ENCODE measurements at regions of chr1 and their contacts with region 1.

Region 1: DNA sequence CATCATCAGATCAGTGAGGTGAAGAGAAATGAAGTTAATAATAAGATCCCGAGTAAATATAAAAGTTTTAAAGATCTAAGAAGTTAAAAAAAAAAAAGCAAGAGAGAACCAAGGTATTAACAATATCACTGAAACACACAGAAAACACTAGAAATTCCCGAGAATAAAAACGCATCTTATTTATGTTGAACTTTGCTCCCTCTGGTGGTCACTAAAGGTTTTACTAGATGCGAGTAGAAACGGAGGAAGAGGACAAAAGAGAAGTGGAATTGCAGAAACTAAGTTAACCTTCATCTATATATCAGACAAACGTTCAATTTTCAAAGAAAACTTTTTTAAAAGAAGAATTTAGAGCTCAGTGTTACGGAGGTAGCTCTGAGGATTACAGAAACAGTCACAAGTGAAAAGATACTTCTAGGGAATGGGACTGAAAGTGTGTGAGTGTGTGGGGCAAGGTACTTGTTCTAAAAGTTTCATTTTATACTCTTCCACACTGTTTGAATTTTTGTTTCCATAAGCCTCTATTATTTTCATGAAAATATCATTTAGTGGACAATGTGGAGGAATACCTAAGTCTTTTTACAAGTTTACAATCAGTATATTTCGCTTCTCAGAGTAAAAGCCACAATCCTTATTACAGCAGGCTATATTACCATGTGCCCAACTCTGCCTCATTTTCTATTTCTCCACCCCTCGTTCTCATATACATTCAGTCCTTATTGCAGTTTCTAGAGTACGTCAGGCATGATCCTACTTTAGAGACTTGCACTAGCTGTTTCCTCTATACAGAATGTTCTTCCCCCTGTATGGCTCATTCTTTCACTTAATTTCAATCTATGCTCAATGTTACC is 19.7 kb downstream of the ACBD6 start:
- DNase-seq: peak in 1 of 2 donors; percentile 73
- ATAC-seq: peak; percentile 50 to 62 (median 52)
- H3K4me3 ChIP-seq: no peak overlapping the region
- H3K4me3 Mint-ChIP-seq: peak overlapping the region; percentile 6
- H3K27ac ChIP-seq: no peak overlapping the region
- H3K27ac Mint-ChIP-seq: peak overlapping the region in 1 of 2 donors; percentile 23
- H3K4me1 ChIP-seq: no peaks in the 10 kb centered on the region
- H3K4me1 Mint-ChIP-seq: peaks cover 14 to 24% of the 10 kb centered on the region in 2 donors
- H3K27me3 ChIP-seq: no peaks in the 10 kb centered on the region
- H3K27me3 Mint-ChIP-seq: no peaks in the 10 kb centered on the region
- CTCF ChIP-seq: peak; percentile 87

Region 2: GRCh38 chr1:179706339-179706941 is 776.2 kb before region 1 on chr1:
- intact Hi-C with region 1: loop called (anchors 5 kb)
- DNase-seq: peak in 1 of 2 donors; percentile 85
- ATAC-seq: no peak
- H3K4me3 ChIP-seq: no peak overlapping the region
- H3K4me3 Mint-ChIP-seq: no peak overlapping the region
- H3K27ac ChIP-seq: no peak overlapping the region
- H3K27ac Mint-ChIP-seq: no peak overlapping the region
- H3K4me1 ChIP-seq: no peaks in the 10 kb centered on the region
- H3K4me1 Mint-ChIP-seq: peaks cover 0 to 8% of the 10 kb centered on the region in 2 donors
- H3K27me3 ChIP-seq: no peaks in the 10 kb centered on the region
- H3K27me3 Mint-ChIP-seq: peaks cover 2 to 4% of the 10 kb centered on the region in 2 donors
- CTCF ChIP-seq: peak; percentile 61

Region 3: DNA sequence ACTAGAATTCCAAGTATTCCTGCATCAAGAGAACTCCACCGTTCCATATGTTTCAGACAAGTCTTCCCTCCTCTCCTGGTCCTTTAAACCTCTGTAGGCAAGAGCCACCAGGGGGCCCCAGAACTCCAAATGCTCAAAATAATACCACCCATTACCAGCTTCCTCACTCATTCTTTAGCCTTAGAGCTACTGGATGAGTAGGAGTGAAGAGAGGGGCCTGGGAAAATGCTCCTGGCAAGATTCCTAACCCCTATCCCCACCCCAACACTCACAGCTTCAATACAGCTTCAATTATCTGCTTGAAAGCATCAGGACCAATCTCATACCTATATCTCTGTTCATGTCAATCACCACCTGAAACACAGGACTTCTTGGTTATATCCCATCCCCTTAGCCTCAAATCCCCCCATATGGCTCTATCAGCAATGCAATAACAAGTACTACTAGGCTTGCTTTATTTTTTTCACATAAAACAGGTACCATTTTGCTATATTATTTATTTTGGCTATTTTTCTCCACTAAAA is 614.8 kb before region 1 on chr1:
- intact Hi-C with region 1: loop called (anchors 5 kb)
- DNase-seq: peak; percentile 35 to 73
- ATAC-seq: peak in 2 of 3 donors; percentile 77 to 89
- H3K4me3 ChIP-seq: no peak overlapping the region
- H3K4me3 Mint-ChIP-seq: no peak overlapping the region
- H3K27ac ChIP-seq: no peak overlapping the region
- H3K27ac Mint-ChIP-seq: peak overlapping the region in 1 of 2 donors; percentile 52
- H3K4me1 ChIP-seq: no peaks in the 10 kb centered on the region
- H3K4me1 Mint-ChIP-seq: peaks cover 18 to 24% of the 10 kb centered on the region in 2 donors
- H3K27me3 ChIP-seq: no peaks in the 10 kb centered on the region
- H3K27me3 Mint-ChIP-seq: no peaks in the 10 kb centered on the region
- CTCF ChIP-seq: peak; percentile 79

Region 4: GRCh38 chr1:180188091-180188506 is 294.6 kb before region 1 on chr1:
- intact Hi-C with region 1: loop called (anchors 2 kb)
- DNase-seq: peak in 1 of 2 donors; percentile 13
- ATAC-seq: no peak
- H3K4me3 ChIP-seq: no peak overlapping the region
- H3K4me3 Mint-ChIP-seq: no peak overlapping the region
- H3K27ac ChIP-seq: no peak overlapping the region
- H3K27ac Mint-ChIP-seq: no peak overlapping the region
- H3K4me1 ChIP-seq: peaks cover 47% of the 10 kb centered on the region
- H3K4me1 Mint-ChIP-seq: peaks cover 43 to 48% of the 10 kb centered on the region in 2 donors
- H3K27me3 ChIP-seq: no peaks in the 10 kb centered on the region
- H3K27me3 Mint-ChIP-seq: peaks cover 7 to 9% of the 10 kb centered on the region in 2 donors
- CTCF ChIP-seq: peak; percentile 33

Region 5: DNA sequence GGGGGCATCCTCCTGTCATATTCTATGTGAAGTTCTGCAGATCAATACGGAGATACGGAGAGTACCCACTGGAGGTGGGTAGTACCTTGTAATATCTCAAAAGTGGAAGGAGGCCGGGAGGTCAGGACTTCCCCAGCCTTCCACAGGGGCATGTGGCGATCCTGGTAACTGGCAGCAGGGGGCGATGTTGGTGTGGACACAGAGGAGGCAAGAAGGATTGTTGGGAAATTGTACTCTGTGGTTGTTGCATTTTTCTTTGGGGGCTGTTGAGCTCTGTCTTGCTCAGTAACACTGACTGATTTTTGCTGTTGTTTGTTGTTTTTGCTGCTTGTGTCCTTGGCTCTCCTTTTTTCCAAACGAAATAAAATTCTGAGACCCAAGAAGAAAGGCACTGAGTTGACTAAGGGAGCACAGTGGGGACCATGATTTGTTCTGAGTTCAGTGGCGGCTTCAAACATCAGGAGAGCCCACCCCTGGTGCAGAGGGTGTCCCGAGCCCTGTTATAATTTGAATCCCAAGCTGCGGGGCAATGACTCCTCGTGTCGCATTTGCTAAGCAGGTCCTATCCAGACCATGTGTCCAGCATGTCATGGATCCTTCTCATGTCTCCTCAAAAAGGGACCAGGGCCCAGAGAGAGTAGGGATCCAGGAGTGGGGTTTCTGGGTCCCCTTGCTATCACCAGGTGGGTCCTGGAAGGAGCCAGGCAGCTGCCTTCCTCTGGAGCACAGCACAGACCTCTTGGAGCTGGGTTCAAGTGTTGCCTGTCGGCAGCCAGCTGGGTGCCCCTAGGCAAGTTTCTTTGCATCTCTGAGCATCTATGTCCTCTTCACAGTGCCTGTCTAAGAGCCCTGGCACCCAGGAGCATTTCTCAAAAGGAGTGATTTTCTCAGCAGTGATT is 229.8 kb before region 1 on chr1:
- intact Hi-C with region 1: loop called (anchors 1 kb)
- DNase-seq: peak; percentile 55 to 76
- ATAC-seq: peak; percentile 70 to 84 (median 70)
- H3K4me3 ChIP-seq: no peak overlapping the region
- H3K4me3 Mint-ChIP-seq: no peak overlapping the region
- H3K27ac ChIP-seq: no peak overlapping the region
- H3K27ac Mint-ChIP-seq: no peak overlapping the region
- H3K4me1 ChIP-seq: peaks cover 7% of the 10 kb centered on the region
- H3K4me1 Mint-ChIP-seq: peaks cover 0 to 6% of the 10 kb centered on the region in 2 donors
- H3K27me3 ChIP-seq: peaks cover 2% of the 10 kb centered on the region
- H3K27me3 Mint-ChIP-seq: peaks cover 7 to 30% of the 10 kb centered on the region in 2 donors
- CTCF ChIP-seq: peak; percentile 70

Region 6: GRCh38 chr1:180407051-180407450 is 75.6 kb before region 1 on chr1:
- intact Hi-C with region 1: no loop called
- DNase-seq: no peak
- ATAC-seq: no peak
- H3K4me3 ChIP-seq: no peak overlapping the region
- H3K4me3 Mint-ChIP-seq: no peak overlapping the region
- H3K27ac ChIP-seq: no peak overlapping the region
- H3K27ac Mint-ChIP-seq: peak overlapping the region in 1 of 2 donors; percentile 38
- H3K4me1 ChIP-seq: no peaks in the 10 kb centered on the region
- H3K4me1 Mint-ChIP-seq: peaks cover 4 to 17% of the 10 kb centered on the region in 2 donors
- H3K27me3 ChIP-seq: no peaks in the 10 kb centered on the region
- H3K27me3 Mint-ChIP-seq: no peaks in the 10 kb centered on the region
- CTCF ChIP-seq: no peak

Region 7: GRCh38 chr1:180502360-180503273 is 20.0 kb after region 1 on chr1 and contains the start of gene ACBD6:
- intact Hi-C with region 1: loop called (anchors 1 kb)
- DNase-seq: peak; percentile 77 to 92
- ATAC-seq: peak; percentile 84 to 95 (median 91)
- H3K4me3 ChIP-seq: peak within 1 kb of the TSS; percentile 89
- H3K4me3 Mint-ChIP-seq: peak within 1 kb of the TSS; percentile 94
- H3K27ac ChIP-seq: peak within 1 kb of the TSS; percentile 81
- H3K27ac Mint-ChIP-seq: peak within 1 kb of the TSS; percentile 84 to 91
- H3K4me1 ChIP-seq: peaks cover 12% of the 10 kb centered on the region
- H3K4me1 Mint-ChIP-seq: peaks cover 14 to 28% of the 10 kb centered on the region in 2 donors
- H3K27me3 ChIP-seq: no peaks in the 10 kb centered on the region
- H3K27me3 Mint-ChIP-seq: peaks cover 0 to 4% of the 10 kb centered on the region in 2 donors
- CTCF ChIP-seq: no peak
- total RNA-seq, gene ACBD6: 29.8 to 47.3 (median 41.9) TPM

Measured in natural killer cell (primary cell).